Heart left ventricle (tissue), 16 donors: ENCODE measurements at regions of chr11 and their contacts with region 1.

Region 1: GRCh38 chr11:1796413-1797011 is 32.8 kb upstream of the CTSD start:
- DNase-seq: no peak
- ATAC-seq: no peak
- H3K4me3 ChIP-seq: no peak overlapping the region
- H3K27ac ChIP-seq: no peak overlapping the region
- H3K4me1 ChIP-seq: peaks cover 0 to 4% (median 0%) of the 10 kb centered on the region in 12 donors
- H3K27me3 ChIP-seq: peaks cover 0 to 30% (median 5%) of the 10 kb centered on the region in 9 donors
- CTCF ChIP-seq: no peak
- POLR2A ChIP-seq: no peak

Region 2: GRCh38 chr11:1326435-1327063 is 470.0 kb before region 1 on chr11:
- intact Hi-C with region 1: loop called in 1 of 10 experiments (anchors 10 kb)
- DNase-seq: no peak
- ATAC-seq: no peak
- H3K4me3 ChIP-seq: no peak overlapping the region
- H3K27ac ChIP-seq: peak overlapping the region in 1 of 12 donors; percentile 35
- H3K4me1 ChIP-seq: peaks cover 0 to 9% (median 0%) of the 10 kb centered on the region in 12 donors
- H3K27me3 ChIP-seq: peaks cover 0 to 9% (median 0%) of the 10 kb centered on the region in 9 donors
- CTCF ChIP-seq: no peak
- POLR2A ChIP-seq: no peak

Region 3: DNA sequence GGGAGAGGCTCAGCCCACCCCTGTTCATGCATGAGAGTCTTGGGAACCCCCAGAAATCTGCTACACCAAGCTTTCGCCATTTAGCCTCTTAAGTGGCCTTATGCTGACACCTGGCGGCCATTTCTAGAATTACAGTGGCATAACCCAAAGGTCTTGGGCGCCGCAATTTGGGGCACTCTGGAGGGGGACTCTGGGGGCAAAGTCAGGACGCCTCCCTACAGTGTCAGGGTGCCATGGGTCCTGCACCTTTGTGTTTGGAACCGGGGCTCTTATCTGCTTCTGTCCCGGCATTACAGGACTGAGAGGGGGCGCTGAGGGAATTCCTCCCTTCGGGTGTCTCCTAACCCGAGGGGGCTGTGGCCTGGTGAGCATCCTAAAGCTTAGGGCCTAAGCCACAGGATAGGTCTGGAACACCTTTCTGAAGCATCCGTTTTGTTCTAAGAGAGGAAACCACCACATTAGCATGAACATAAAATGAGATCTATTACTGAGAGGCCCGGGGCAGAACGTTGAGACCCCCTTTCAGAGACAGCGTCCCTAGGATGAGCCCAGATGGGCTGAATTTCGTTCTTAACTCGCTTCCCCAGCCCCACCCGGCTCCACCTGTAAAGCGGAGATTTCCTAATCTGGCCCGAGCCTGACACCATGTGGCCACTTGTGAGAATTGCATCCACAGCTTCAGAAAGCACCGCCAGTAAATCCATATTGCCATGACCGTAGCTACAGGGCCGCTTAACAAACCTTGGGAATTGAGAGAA is 355.2 kb after region 1 on chr11:
- intact Hi-C with region 1: no loop called
- DNase-seq: peak in 4 of 5 donors; percentile 67 to 78 (median 72)
- ATAC-seq: peak; percentile 30 to 64 (median 44)
- H3K4me3 ChIP-seq: no peak overlapping the region
- H3K27ac ChIP-seq: no peak overlapping the region
- H3K4me1 ChIP-seq: peaks cover 0 to 10% (median 5%) of the 10 kb centered on the region in 12 donors
- H3K27me3 ChIP-seq: peaks cover 7 to 44% (median 24%) of the 10 kb centered on the region in 9 donors
- CTCF ChIP-seq: peak; percentile 61 to 83 (median 73)
- POLR2A ChIP-seq: no peak